Activated B cell treated with CpG ODN at 0.5 μM for 24 hours (primary cell): ENCODE measurements at regions of chr11 and their contacts with region 1.

Region 1: DNA sequence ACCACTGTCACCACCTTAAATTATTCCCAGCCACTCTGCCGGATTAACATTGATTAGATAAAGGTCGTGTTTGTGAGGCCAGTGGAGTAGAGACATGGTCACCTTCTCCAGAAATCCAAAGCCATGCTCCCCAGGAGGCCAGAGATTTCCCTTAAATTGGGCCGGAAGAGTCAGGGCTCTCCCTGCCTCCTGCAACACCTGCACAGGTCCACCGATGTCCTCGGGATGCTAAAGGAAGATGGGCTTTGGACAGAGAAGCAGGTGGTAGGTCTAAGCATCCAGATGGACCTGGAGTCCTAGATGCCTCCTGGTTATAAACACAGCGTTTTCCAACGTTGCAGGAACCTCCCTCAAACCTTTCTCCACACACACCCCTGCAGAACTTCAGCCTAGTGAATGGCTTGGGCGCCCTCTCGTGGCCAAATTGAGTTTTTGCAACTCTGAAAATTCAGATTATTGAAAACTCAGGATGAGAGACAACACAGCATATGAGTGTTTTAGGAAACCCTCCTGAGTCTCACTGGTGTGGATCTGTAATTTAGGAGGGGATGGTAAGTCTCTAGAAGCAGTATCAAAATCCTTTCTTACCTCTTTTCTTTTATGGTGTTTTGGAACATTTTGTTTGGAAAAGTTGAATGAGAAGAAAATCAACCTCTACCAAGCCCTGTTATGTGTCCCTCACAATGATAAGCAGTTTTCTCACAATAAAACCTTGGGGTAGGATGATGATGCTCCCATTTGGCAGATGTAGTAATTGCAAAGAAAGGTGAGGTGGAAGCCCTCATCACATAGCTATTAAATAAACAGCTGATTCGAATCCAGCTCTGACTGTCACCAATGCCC is 109.6 kb downstream of the RRAS2 start:
- DNase-seq: peak; percentile 54
- ATAC-seq: peak; percentile 49
- H3K4me3 Mint-ChIP-seq: peak overlapping the region; percentile 41
- H3K27ac Mint-ChIP-seq: no peak overlapping the region
- H3K4me1 Mint-ChIP-seq: peaks cover 17% of the 10 kb centered on the region
- H3K27me3 Mint-ChIP-seq: peaks cover 27% of the 10 kb centered on the region
- CTCF ChIP-seq: peak; percentile 71

Region 2: DNA sequence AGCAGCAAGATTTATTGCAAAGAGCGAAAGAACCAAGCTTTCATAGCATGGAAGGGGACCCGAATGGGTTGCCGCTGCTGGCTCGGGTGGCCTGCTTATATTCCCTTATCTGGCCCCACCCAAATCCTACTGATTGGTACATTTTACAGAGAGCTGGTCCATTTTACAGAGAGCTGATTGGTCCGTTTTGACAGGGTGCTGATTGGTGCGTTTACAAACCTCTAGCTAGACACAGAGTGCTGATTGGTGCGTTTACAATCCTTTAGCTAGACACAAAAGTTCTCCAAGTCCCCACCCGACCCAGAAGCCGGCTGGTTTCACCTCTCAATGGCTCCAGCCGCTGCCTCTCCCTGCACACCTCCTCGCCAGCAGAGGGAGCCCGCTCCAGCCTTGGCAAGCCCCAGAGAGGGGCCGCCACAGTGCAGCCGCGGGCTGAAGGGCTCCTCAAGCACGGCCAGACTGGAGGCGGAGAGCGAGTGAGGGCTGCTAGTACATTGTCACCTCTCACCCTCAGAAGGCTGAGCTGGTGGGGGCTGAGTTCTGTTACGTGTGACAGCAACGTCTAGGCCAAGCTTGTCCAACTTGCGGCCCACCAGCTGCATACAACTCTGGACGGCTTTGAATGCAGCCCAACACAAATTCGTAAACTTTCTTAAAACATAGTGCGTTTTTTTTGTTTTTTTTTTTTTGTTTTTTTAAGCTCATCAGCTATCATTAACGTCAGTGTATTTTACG is 762.2 kb before region 1 on chr11:
- CTCF ChIA-PET with region 1: no interaction called
- POLR2A ChIA-PET with region 1: no interaction called
- intact Hi-C with region 1: loop called (anchors 1 kb)
- DNase-seq: peak; percentile 37
- ATAC-seq: peak; percentile 89
- H3K4me3 Mint-ChIP-seq: peak overlapping the region; percentile 74
- H3K27ac Mint-ChIP-seq: no peak overlapping the region
- H3K4me1 Mint-ChIP-seq: no peaks in the 10 kb centered on the region
- H3K27me3 Mint-ChIP-seq: peaks cover 4% of the 10 kb centered on the region
- CTCF ChIP-seq: no peak

Region 3: DNA sequence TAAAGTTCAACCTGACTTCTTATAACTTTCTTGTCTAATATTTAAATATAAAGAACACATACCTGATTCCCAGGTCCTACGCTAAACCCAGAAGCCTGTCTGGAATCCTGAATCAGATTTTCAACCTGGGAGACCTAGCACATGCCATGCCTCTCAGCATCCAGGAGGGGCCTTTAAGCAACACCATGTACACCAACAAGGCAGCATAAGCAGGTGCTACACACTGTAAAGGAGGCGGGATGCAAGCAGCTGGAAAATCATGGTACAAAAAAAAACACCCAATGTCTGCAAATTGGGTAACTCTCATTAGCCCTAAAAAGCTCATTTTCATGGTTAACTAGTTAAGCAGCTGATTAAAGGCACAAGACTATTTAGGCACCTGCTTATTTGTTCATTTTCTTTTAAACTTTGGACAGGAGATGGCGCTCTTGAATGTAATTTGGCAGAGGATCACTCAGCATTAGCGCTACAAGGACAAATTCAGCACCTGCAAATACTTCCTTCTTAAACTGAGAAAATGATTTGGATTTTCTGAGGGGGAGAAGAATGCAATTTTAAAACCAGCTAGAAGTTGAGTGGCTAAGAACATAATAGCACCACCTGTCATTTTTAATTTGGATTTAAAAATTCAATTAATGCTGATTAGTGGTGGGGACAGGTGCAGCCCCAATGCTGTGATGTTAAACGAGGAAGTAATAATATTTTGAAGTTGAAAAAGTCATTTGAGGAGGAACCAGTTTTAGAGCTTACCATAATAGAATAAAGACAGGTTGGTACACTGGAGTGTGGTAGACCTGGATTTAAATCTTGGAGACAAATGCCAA is 476.9 kb before region 1 on chr11:
- CTCF ChIA-PET with region 1: interaction called, 22 read pairs
- POLR2A ChIA-PET with region 1: no interaction called
- intact Hi-C with region 1: loop called (anchors 1 kb)
- DNase-seq: no peak
- ATAC-seq: peak; percentile 57
- H3K4me3 Mint-ChIP-seq: no peak overlapping the region
- H3K27ac Mint-ChIP-seq: no peak overlapping the region
- H3K4me1 Mint-ChIP-seq: peaks cover 6% of the 10 kb centered on the region
- H3K27me3 Mint-ChIP-seq: peaks cover 15% of the 10 kb centered on the region
- CTCF ChIP-seq: no peak

Region 4: GRCh38 chr11:13874597-13874996 is 374.7 kb before region 1 on chr11:
- CTCF ChIA-PET with region 1: no interaction called
- POLR2A ChIA-PET with region 1: no interaction called
- intact Hi-C with region 1: loop called (anchors 5 kb)
- DNase-seq: no peak
- ATAC-seq: no peak
- H3K4me3 Mint-ChIP-seq: no peak overlapping the region
- H3K27ac Mint-ChIP-seq: no peak overlapping the region
- H3K4me1 Mint-ChIP-seq: peaks cover 5% of the 10 kb centered on the region
- H3K27me3 Mint-ChIP-seq: peaks cover 14% of the 10 kb centered on the region
- CTCF ChIP-seq: no peak

Region 5: DNA sequence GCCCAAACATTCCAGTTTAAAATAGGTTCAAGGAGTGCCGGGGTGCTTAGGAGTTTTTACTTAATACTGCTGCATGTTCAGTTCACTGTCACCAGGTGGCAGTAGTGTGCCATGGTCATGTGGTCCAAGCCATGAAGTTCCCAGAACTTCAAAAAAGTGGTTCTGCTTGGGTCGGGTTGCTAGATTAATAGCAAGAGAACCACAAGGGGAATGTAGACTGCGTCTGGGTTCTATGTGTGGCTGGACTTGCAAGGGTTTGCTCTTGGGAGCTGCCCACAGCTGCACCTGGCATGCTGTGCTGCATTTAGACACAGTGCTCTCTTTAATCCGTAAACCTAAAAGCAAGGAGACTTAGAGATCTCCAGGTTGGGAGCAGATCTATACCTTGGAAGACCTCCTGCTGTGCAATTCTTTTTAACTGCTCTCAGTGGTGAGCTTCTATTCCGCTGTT is 293.3 kb before region 1 on chr11:
- CTCF ChIA-PET with region 1: interaction called, 28 read pairs
- POLR2A ChIA-PET with region 1: no interaction called
- intact Hi-C with region 1: loop called (anchors 1 kb)
- DNase-seq: no peak
- ATAC-seq: peak; percentile 65
- H3K4me3 Mint-ChIP-seq: no peak overlapping the region
- H3K27ac Mint-ChIP-seq: no peak overlapping the region
- H3K4me1 Mint-ChIP-seq: no peaks in the 10 kb centered on the region
- H3K27me3 Mint-ChIP-seq: peaks cover 25% of the 10 kb centered on the region
- CTCF ChIP-seq: peak; percentile 16

Region 6: GRCh38 chr11:14148653-14149273 is 100.6 kb before region 1 on chr11:
- CTCF ChIA-PET with region 1: interaction called, 4 read pairs
- POLR2A ChIA-PET with region 1: no interaction called
- intact Hi-C with region 1: loop called (anchors 2 kb)
- DNase-seq: no peak
- ATAC-seq: no peak
- H3K4me3 Mint-ChIP-seq: no peak overlapping the region
- H3K27ac Mint-ChIP-seq: no peak overlapping the region
- H3K4me1 Mint-ChIP-seq: no peaks in the 10 kb centered on the region
- H3K27me3 Mint-ChIP-seq: peaks cover 14% of the 10 kb centered on the region
- CTCF ChIP-seq: no peak